Ovary (tissue), 10 donors: ENCODE measurements at regions of chr12 and their contacts with region 1.

Region 1: GRCh38 chr12:95117178-95117599 is 43.8 kb upstream of the NR2C1 start:
- DNase-seq: peak in 4 of 5 donors; percentile 59 to 84 (median 76)
- H3K4me3 ChIP-seq: no peak overlapping the region
- H3K27ac ChIP-seq: no peak overlapping the region
- H3K4me1 ChIP-seq: peaks cover 6% of the 10 kb centered on the region
- H3K27me3 ChIP-seq: no peaks in the 10 kb centered on the region
- CTCF ChIP-seq: peak; percentile 62 to 82 (median 82)
- EP300 ChIP-seq: no peak
- POLR2A ChIP-seq: no peak

Region 2: GRCh38 chr12:94954029-94954685 is 163.0 kb before region 1 on chr12:
- intact Hi-C with region 1: no loop called
- DNase-seq: no peak
- H3K4me3 ChIP-seq: no peak overlapping the region
- H3K27ac ChIP-seq: no peak overlapping the region
- H3K4me1 ChIP-seq: no peaks in the 10 kb centered on the region
- H3K27me3 ChIP-seq: no peaks in the 10 kb centered on the region
- CTCF ChIP-seq: no peak
- EP300 ChIP-seq: no peak
- POLR2A ChIP-seq: no peak

Region 3: DNA sequence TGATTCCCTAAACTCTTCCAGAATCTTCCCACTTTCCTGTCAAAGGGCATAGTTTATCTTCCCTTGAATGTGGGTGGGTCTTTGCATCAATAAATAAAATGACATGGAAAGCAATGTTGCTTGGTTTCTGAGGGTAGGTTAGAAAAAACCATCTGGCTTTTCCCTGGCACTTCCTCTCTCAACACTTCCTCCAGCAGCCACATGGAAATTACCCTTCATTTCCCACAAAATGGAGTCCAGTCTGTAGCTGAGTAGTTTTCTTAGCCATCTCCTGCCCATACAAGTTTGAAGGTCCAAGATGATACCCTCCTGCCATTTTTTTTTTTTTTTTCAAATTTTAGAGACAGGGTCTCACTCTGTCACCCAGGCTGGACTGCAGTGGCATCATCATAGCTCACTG is 102.6 kb before region 1 on chr12:
- intact Hi-C with region 1: no loop called
- DNase-seq: no peak
- H3K4me3 ChIP-seq: no peak overlapping the region
- H3K27ac ChIP-seq: no peak overlapping the region
- H3K4me1 ChIP-seq: no peaks in the 10 kb centered on the region
- H3K27me3 ChIP-seq: no peaks in the 10 kb centered on the region
- CTCF ChIP-seq: no peak
- EP300 ChIP-seq: no peak
- POLR2A ChIP-seq: no peak

Region 4: DNA sequence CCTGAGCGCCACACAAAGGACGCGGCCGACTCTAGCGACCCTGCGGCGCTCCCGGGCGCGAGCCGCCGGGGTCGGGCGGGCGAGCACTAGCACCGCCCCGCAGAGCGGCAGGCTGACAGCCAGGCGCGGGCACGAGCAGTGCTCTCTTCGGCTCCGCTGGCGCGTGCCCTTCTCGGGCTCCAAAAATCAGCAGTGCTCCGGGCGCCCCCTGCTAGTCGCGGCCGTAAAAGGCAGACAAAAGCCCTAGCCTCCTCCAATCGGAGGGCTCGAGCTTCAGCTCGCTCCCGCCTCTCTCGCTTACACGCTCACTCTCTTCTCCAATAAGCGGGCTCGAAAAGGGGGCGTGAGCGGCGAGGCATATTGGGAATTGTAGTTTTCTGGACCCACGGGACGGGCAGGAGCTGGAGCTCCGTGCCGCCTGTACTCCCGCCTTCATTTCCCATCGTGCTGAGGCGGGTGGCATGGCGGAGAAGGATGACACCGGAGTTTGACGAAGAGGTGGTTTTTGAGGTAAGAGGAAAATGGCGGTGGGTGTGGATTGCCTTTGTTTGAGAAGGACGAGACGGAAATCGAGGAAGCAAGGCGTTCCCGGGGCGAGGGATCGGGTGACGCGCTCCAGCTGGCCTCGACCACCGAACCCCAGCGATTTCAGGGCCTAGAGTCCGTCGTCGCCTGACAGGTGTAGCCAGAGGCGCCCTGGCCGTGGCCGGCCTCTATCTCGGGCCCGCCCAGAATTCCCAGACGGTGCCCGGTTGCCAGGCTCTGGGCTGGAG is 100.4 kb after region 1 on chr12 and contains the starts of genes FGD6 and VEZT:
- intact Hi-C with region 1: loop called in 2 of 4 experiments (anchors 5 kb)
- DNase-seq: peak; percentile 98 to 99 (median 98)
- H3K4me3 ChIP-seq: peak within 1 kb of the TSS; percentile 81
- H3K27ac ChIP-seq: peak within 1 kb of the TSS; percentile 94 to 97
- H3K4me1 ChIP-seq: peaks cover 7% of the 10 kb centered on the region
- H3K27me3 ChIP-seq: no peaks in the 10 kb centered on the region
- CTCF ChIP-seq: peak in 2 of 3 donors; percentile 76 to 84
- EP300 ChIP-seq: peak; percentile 24
- POLR2A ChIP-seq: peak; percentile 82
- total RNA-seq, gene FGD6: 7.0 to 18.7 (median 15.8) TPM
- total RNA-seq, gene VEZT: 52.1 to 67.7 (median 53.5) TPM

Region 5: DNA sequence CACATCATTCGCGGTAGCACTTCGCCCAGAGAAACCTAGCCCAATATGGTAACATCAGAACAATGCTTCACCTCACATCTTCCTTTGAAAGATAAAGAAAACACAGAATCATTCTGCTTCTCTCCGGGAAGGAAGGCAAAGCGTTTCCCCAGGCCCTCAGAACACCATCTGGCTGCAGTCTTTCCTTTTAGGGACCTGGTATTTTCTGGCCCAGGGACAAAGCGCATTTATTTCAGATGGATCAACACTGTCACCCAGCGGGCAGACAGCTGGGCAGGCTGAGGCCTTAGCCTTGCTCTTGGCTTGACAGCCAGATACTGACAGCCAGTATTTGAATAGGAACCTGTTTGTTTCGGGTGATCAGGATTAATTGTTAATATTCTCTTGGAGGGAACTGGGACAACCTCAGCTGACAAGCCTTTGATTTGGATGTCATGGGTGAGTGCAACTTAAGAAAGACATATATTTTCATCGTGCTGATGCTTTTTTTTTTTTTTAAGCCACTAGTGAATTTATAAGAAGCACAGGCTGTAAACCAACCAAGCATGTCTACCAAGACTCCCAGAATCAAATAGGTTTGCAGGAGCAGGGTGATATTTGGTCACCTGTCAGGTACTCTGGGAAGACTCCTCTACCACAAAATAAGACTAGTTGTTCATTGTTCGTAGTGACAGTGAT is 219.3 kb after region 1 on chr12:
- intact Hi-C with region 1: loop called (anchors 5 kb)
- DNase-seq: peak; percentile 61 to 81 (median 78)
- H3K4me3 ChIP-seq: no peak overlapping the region
- H3K27ac ChIP-seq: no peak overlapping the region
- H3K4me1 ChIP-seq: no peaks in the 10 kb centered on the region
- H3K27me3 ChIP-seq: no peaks in the 10 kb centered on the region
- CTCF ChIP-seq: peak; percentile 66 to 76 (median 67)
- EP300 ChIP-seq: no peak
- POLR2A ChIP-seq: no peak

Region 6: DNA sequence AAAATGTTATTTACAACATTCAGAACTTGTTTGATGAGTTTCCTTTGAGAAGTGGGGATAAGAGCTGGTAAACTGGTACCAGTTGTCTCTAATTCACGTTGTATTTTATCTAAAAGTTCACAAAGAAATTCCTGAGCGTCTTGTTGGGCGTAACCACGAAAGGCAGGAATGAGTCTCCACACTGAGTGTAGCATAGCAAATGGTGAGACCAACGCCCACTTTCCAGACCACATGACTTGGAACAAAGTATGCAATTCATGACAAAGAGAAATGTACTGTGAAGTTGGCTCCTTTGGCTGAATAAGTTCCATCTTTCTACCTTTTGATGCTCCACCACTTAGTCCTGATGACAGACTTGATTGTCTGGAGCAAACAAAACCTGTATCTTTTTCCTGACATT is 415.7 kb after region 1 on chr12:
- intact Hi-C with region 1: loop called (anchors 5 to 10 kb)
- DNase-seq: no peak
- H3K4me3 ChIP-seq: no peak overlapping the region
- H3K27ac ChIP-seq: no peak overlapping the region
- H3K4me1 ChIP-seq: no peaks in the 10 kb centered on the region
- H3K27me3 ChIP-seq: no peaks in the 10 kb centered on the region
- CTCF ChIP-seq: no peak
- EP300 ChIP-seq: no peak
- POLR2A ChIP-seq: no peak

Region 7: GRCh38 chr12:95538656-95539055 is 421.5 kb after region 1 on chr12:
- intact Hi-C with region 1: loop called (anchors 5 to 10 kb)
- DNase-seq: no peak
- H3K4me3 ChIP-seq: no peak overlapping the region
- H3K27ac ChIP-seq: no peak overlapping the region
- H3K4me1 ChIP-seq: no peaks in the 10 kb centered on the region
- H3K27me3 ChIP-seq: no peaks in the 10 kb centered on the region
- CTCF ChIP-seq: no peak
- EP300 ChIP-seq: no peak
- POLR2A ChIP-seq: no peak